ENCODE measurements at regions of chr16 and their contacts with region 1.

Region 1: DNA sequence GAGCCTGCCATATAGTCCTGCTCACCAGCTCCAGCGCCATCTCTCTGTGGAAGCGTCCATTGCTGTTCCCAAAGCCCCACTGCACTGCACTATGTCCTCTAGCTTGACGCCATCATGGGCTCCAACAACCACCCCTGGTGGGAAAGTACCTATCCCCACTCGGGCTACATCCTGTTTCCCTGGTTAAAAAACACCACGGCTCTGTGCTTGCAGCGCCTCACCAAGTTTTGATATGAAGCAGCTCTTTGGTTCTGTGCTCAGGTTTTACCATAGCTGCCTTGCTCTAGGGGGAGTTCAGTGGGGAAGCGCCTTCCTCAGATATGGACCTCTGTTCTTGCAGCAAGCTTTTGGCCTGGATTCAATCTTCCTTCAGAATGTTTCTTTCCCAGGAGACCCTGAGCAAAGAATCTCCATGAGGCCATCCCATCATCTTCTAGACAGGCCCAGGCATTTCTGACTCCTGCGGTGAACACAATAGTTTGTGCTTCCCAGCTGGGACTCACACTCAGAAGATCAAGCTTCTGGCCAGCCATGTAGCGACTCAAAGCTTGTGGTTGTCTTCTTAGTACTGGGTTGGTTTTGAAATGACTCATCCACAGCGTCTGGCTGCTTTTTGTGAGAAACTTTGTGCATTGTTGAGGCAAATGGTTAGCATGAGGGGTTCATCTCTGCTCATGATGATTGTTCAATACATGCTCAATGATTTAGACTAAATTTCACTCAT is 39.5 kb downstream of the DYNLRB2 start:
- DNase-seq: peak; percentile 86
- ATAC-seq: peak; percentile 91
- H3K4me3 Mint-ChIP-seq: peak overlapping the region; percentile 60
- H3K27ac Mint-ChIP-seq: peak overlapping the region; percentile 99
- H3K4me1 Mint-ChIP-seq: peaks cover 50% of the 10 kb centered on the region
- H3K27me3 Mint-ChIP-seq: peaks cover 2% of the 10 kb centered on the region

Region 2: GRCh38 chr16:79286646-79287423 is 1293.4 kb before region 1 on chr16:
- CTCF ChIA-PET with region 1: no interaction called
- POLR2A ChIA-PET with region 1: no interaction called
- intact Hi-C with region 1: loop called in 1 of 2 experiments (anchors 10 kb)
- DNase-seq: peak; percentile 63
- ATAC-seq: peak; percentile 70
- H3K4me3 Mint-ChIP-seq: peak overlapping the region; percentile 34
- H3K27ac Mint-ChIP-seq: peak overlapping the region; percentile 86
- H3K4me1 Mint-ChIP-seq: peaks cover 52% of the 10 kb centered on the region
- H3K27me3 Mint-ChIP-seq: peaks cover 12% of the 10 kb centered on the region

Region 3: GRCh38 chr16:80433623-80434022 is 146.6 kb before region 1 on chr16:
- CTCF ChIA-PET with region 1: no interaction called
- POLR2A ChIA-PET with region 1: no interaction called
- intact Hi-C with region 1: no loop called
- DNase-seq: peak; percentile 17
- ATAC-seq: peak; percentile 74
- H3K4me3 Mint-ChIP-seq: no peak overlapping the region
- H3K27ac Mint-ChIP-seq: no peak overlapping the region
- H3K4me1 Mint-ChIP-seq: no peaks in the 10 kb centered on the region
- H3K27me3 Mint-ChIP-seq: peaks cover 29% of the 10 kb centered on the region

Region 4: GRCh38 chr16:80540516-80541272 is 39.6 kb before region 1 on chr16 and contains the start of gene DYNLRB2:
- CTCF ChIA-PET with region 1: no interaction called
- POLR2A ChIA-PET with region 1: interaction called, 7 read pairs
- intact Hi-C with region 1: loop called (anchors 1 to 2 kb)
- DNase-seq: peak; percentile 95
- ATAC-seq: peak; percentile 91
- H3K4me3 Mint-ChIP-seq: peak within 1 kb of the TSS; percentile 97
- H3K27ac Mint-ChIP-seq: peak within 1 kb of the TSS; percentile 99
- H3K4me1 Mint-ChIP-seq: peaks cover 28% of the 10 kb centered on the region
- H3K27me3 Mint-ChIP-seq: peaks cover 4% of the 10 kb centered on the region
- total RNA-seq, gene DYNLRB2: not detected

Region 5: GRCh38 chr16:80656711-80657150 is 76.5 kb after region 1 on chr16:
- CTCF ChIA-PET with region 1: no interaction called
- POLR2A ChIA-PET with region 1: no interaction called
- intact Hi-C with region 1: loop called (anchors 1 to 2 kb)
- DNase-seq: peak; percentile 57
- ATAC-seq: peak; percentile 92
- H3K4me3 Mint-ChIP-seq: peak overlapping the region; percentile 77
- H3K27ac Mint-ChIP-seq: peak overlapping the region; percentile 87
- H3K4me1 Mint-ChIP-seq: peaks cover 27% of the 10 kb centered on the region
- H3K27me3 Mint-ChIP-seq: no peaks in the 10 kb centered on the region

Region 6: DNA sequence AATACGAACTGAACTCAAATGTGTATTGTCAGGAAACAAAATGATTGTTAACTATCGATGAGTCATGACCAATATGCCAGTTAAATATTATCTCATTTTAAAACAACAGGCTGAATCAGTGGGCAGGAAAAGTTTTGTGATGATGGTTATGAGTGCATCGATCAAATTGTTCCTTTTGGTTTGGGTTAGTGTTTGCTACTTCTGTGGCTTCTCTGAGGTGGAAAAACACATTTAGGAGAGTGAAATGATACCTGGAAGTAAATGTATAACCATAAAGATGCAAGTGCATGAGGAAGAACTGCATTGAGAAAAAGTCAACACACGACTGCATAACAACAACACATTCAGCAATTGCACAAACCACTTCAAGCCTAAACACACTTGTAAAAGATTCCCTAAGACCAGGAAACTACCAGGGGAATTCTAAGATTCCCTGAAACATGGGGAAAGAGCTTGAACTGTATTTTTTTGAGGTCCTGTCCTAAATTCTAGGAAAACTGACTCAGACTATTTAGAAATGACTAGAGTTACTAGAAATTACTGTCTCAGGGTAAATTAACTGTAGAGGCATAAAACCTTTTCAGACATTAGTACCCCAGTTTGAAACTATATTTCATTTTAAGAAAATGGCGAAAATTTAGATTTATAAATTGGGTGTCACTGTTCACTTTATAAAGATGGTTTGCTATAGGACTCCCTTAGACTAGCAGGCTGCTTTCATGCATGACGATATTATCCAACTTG is 179.3 kb after region 1 on chr16:
- CTCF ChIA-PET with region 1: no interaction called
- POLR2A ChIA-PET with region 1: no interaction called
- intact Hi-C with region 1: loop called (anchors 1 kb)
- DNase-seq: no peak
- ATAC-seq: peak; percentile 76
- H3K4me3 Mint-ChIP-seq: no peak overlapping the region
- H3K27ac Mint-ChIP-seq: peak overlapping the region; percentile 65
- H3K4me1 Mint-ChIP-seq: peaks cover 15% of the 10 kb centered on the region
- H3K27me3 Mint-ChIP-seq: no peaks in the 10 kb centered on the region

Region 7: GRCh38 chr16:80883159-80883642 is 302.9 kb after region 1 on chr16:
- CTCF ChIA-PET with region 1: no interaction called
- POLR2A ChIA-PET with region 1: no interaction called
- intact Hi-C with region 1: no loop called
- DNase-seq: no peak
- ATAC-seq: no peak
- H3K4me3 Mint-ChIP-seq: no peak overlapping the region
- H3K27ac Mint-ChIP-seq: no peak overlapping the region
- H3K4me1 Mint-ChIP-seq: no peaks in the 10 kb centered on the region
- H3K27me3 Mint-ChIP-seq: peaks cover 14% of the 10 kb centered on the region

Region 8: GRCh38 chr16:80948886-80949493 is 368.7 kb after region 1 on chr16:
- CTCF ChIA-PET with region 1: no interaction called
- POLR2A ChIA-PET with region 1: no interaction called
- intact Hi-C with region 1: loop called in 1 of 2 experiments (anchors 1 kb)
- DNase-seq: peak; percentile 79
- ATAC-seq: peak; percentile 62
- H3K4me3 Mint-ChIP-seq: no peak overlapping the region
- H3K27ac Mint-ChIP-seq: no peak overlapping the region
- H3K4me1 Mint-ChIP-seq: peaks cover 22% of the 10 kb centered on the region
- H3K27me3 Mint-ChIP-seq: peaks cover 10% of the 10 kb centered on the region